ENCODE measurements at regions of chr19 and their contacts with region 1.

Region 1: DNA sequence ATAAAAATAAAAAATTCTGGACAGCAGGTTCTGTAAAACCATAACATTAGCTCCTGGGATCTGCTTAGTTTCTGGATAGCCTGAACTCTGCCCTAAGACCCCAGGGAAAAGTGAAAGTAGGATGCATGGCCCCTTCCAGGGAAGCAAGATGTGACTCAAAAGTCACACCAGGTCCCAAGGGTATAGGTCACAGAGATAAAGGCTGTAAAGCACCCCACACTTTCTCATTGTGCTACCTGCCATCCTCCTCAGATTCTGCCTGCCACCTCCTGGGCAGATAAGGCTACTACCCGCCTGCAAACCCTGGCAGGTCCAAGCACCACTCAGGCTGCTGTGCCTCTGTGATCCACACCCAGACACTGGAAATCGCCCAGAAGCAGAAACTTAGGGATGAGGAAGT is 20.6 kb downstream of the FFAR2 start:
- DNase-seq: peak; percentile 81
- ATAC-seq: peak; percentile 100
- H3K4me3 Mint-ChIP-seq: no peak overlapping the region
- H3K27ac Mint-ChIP-seq: no peak overlapping the region
- H3K4me1 Mint-ChIP-seq: peaks cover 7% of the 10 kb centered on the region
- H3K27me3 Mint-ChIP-seq: no peaks in the 10 kb centered on the region

Region 2: GRCh38 chr19:35247526-35248306 is 220.9 kb before region 1 on chr19:
- CTCF ChIA-PET with region 1: no interaction called
- POLR2A ChIA-PET with region 1: no interaction called
- intact Hi-C with region 1: no loop called
- DNase-seq: peak; percentile 75
- ATAC-seq: peak; percentile 63
- H3K4me3 Mint-ChIP-seq: peak overlapping the region; percentile 79
- H3K27ac Mint-ChIP-seq: peak overlapping the region; percentile 87
- H3K4me1 Mint-ChIP-seq: peaks cover 22% of the 10 kb centered on the region
- H3K27me3 Mint-ChIP-seq: peaks cover 20% of the 10 kb centered on the region

Region 3: GRCh38 chr19:35306473-35307246 is 162.0 kb before region 1 on chr19:
- CTCF ChIA-PET with region 1: no interaction called
- POLR2A ChIA-PET with region 1: no interaction called
- intact Hi-C with region 1: loop called in 1 of 2 experiments (anchors 1 kb)
- DNase-seq: peak; percentile 52
- ATAC-seq: peak; percentile 51
- H3K4me3 Mint-ChIP-seq: no peak overlapping the region
- H3K27ac Mint-ChIP-seq: no peak overlapping the region
- H3K4me1 Mint-ChIP-seq: no peaks in the 10 kb centered on the region
- H3K27me3 Mint-ChIP-seq: no peaks in the 10 kb centered on the region

Region 4: DNA sequence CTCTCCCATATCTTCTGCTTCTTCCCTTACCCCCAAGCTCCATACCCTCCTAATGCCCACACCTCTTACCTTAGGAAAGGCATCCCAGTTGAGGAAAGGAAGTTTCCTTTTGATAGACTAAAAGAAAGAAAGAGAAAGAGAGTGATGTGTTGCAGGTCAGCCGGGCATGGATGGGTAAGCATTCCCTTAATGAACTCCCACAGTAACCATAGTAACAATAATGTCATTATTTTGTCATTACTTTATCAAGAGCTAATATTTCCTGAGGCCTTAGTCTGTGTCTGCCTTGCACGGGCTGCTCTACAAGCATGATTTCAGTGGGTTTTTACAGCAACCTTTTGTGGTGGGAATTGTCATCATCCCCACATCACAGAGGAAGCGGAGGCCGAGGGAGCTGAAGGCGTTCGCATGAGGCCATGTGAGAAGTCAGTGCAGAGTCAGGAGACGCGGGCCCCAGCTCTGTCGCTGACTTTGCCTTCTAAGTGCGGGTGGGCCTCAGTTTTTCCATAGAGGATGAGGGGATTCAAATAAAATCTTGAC is 19.1 kb after region 1 on chr19:
- CTCF ChIA-PET with region 1: interaction called, 11 read pairs
- POLR2A ChIA-PET with region 1: no interaction called
- intact Hi-C with region 1: no loop called
- DNase-seq: no peak
- ATAC-seq: no peak
- H3K4me3 Mint-ChIP-seq: no peak overlapping the region
- H3K27ac Mint-ChIP-seq: no peak overlapping the region
- H3K4me1 Mint-ChIP-seq: peaks cover 9% of the 10 kb centered on the region
- H3K27me3 Mint-ChIP-seq: peaks cover 4% of the 10 kb centered on the region

Measured in activated CD4-positive, alpha-beta T cell treated with anti-CD3 and anti-CD28 coated beads for 36 hours (primary cell).